Activated CD4-positive, alpha-beta T cell treated with anti-CD3 and anti-CD28 coated beads, Interleukin-2, amount 10 ng/mL, durations not matched to agents 24 days and 14 days (primary cell): ENCODE measurements at regions of chrX and their contacts with region 1.

Region 1: DNA sequence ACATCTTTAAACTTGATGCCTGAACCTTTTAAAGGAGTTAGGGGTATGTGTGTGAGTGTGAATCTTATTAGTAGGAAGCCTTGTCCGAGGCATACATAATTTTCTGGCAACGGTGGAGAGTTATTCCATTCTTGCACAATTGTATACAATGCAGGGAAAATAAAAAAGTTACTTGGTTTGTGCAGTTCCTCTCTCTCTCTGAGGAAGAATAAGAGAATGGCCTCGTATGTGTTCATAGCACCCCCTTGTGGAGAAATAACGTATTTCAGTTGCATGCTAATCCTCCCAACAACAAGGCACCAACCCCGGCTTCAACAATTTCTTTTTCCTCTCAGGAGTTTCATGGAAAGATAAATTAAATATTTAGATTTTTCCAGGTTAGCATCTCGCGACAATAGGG is 33.7 kb upstream of the FGF13 start:
- DNase-seq: peak; percentile 70
- H3K4me3 Mint-ChIP-seq: no peak overlapping the region
- H3K27ac Mint-ChIP-seq: no peak overlapping the region
- H3K4me1 Mint-ChIP-seq: no peaks in the 10 kb centered on the region
- H3K27me3 Mint-ChIP-seq: no peaks in the 10 kb centered on the region

Region 2: DNA sequence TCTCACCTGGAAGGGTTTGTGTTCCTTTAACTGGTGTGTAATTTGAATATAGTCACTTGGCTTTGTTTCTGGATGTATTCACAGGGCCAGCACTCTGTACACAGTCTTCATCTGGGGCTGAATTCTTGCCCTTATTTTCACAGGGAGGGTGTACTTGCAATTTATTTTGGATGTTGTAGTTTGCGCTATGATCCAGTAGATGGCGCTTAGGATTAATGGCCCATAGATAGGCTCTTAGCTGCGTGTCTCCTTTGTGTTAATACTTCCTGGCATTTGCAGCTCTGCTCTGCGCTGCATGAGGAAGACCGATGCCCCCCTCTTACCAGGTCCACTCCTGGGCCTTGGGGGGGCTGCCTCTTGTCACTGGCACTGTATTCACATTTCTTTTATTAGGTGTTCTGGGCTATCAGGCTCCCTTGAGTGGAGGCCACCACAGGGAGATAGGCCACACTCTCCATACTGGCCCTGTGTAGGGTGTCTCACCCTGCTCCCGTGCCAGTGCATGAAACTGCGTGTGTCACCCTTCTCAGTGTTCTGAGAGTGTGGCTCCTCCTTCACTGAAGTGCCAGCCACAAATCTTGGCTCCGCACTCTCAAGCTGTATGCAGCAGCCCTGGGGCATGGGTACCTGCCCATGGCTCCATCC is 617.0 kb before region 1 on chrX:
- intact Hi-C with region 1: loop called (anchors 5 kb)
- DNase-seq: peak; percentile 65
- H3K4me3 Mint-ChIP-seq: no peak overlapping the region
- H3K27ac Mint-ChIP-seq: no peak overlapping the region
- H3K4me1 Mint-ChIP-seq: no peaks in the 10 kb centered on the region
- H3K27me3 Mint-ChIP-seq: no peaks in the 10 kb centered on the region

Region 3: GRCh38 chrX:138191998-138192397 is 553.2 kb before region 1 on chrX:
- intact Hi-C with region 1: loop called (anchors 5 kb)
- DNase-seq: no peak
- H3K4me3 Mint-ChIP-seq: no peak overlapping the region
- H3K27ac Mint-ChIP-seq: no peak overlapping the region
- H3K4me1 Mint-ChIP-seq: no peaks in the 10 kb centered on the region
- H3K27me3 Mint-ChIP-seq: no peaks in the 10 kb centered on the region

Region 4: DNA sequence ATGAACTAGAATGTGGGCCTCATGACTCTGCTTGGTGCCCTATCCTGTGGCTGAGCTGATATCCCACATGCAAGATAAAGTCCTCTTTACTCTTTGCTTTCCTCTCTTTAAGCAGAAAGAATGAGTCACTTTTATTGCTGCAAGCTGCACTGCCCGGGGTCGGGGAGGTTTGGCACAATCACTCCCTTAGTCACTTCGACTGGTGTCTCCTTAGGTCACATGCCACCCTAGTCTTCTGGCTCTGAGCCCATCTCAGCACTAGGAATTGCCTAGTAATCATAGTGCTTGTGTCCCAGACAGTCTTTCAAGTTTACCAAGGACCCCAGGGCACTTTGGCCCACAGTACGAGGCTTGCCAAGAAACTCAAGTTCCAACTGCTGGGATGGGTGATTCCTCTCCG is 1295.2 kb after region 1 on chrX:
- intact Hi-C with region 1: no loop called
- DNase-seq: no peak
- H3K4me3 Mint-ChIP-seq: no peak overlapping the region
- H3K27ac Mint-ChIP-seq: no peak overlapping the region
- H3K4me1 Mint-ChIP-seq: no peaks in the 10 kb centered on the region
- H3K27me3 Mint-ChIP-seq: no peaks in the 10 kb centered on the region